ENCODE measurements at regions of chr19 and their contacts with region 1.

Region 1: DNA sequence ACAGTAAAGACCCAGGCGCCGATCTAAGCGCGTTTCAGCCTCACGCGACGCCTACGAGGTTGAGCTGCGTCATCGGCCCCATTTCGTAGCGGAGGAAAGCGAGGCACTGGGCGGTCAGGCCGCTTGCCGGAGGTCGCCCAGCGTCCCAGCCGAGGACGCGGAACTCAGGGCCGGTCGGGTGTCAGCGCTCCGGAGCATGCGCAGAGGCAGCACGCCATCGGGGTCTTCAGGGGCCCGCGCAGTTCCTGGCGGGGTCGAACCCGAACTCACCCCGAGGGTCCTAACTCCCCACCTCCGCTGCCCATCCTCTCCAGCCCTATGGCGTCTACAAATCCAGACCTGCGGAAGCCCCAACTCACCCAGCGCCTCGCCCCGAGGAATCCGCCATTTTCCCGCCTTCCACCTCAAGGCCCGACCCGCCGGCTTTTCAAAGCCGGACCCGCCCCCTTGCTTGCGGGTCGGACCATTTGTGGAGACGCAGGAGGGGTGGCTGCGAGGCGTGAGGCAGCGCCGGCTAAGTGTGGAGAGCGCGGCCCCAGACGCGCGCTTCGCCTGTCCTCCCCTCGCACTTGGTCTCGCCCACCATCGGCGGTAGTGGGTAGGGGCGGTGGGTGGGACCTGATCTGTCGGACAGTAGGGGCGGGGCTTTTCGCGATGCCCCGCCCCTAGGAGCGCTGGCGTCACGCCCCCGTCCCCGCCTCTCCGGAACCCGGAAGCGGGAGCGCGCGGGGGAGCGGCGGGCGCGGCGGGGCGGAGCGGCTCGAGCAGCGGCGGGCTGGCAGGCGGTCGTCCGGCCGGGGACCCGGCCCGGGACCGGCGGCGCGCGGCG is at the starts of genes HAUS8 and MYO9B:
- DNase-seq: peak; percentile 98 to 100 (median 99)
- ATAC-seq: peak; percentile 89 to 96
- H3K4me3 Mint-ChIP-seq: peak within 1 kb of the TSS; percentile 91 to 99 (median 98)
- H3K27ac Mint-ChIP-seq: peak within 1 kb of the TSS; percentile 92 to 99 (median 97)
- H3K4me1 Mint-ChIP-seq: peaks cover 29 to 74% (median 66%) of the 10 kb centered on the region in 4 donors
- H3K27me3 Mint-ChIP-seq: no peaks in the 10 kb centered on the region
- polyA plus RNA-seq, gene HAUS8: 5.3 to 11.9 (median 5.9) TPM
- polyA plus RNA-seq, gene MYO9B: 3.3 to 22.3 (median 8.0) TPM

Region 2: DNA sequence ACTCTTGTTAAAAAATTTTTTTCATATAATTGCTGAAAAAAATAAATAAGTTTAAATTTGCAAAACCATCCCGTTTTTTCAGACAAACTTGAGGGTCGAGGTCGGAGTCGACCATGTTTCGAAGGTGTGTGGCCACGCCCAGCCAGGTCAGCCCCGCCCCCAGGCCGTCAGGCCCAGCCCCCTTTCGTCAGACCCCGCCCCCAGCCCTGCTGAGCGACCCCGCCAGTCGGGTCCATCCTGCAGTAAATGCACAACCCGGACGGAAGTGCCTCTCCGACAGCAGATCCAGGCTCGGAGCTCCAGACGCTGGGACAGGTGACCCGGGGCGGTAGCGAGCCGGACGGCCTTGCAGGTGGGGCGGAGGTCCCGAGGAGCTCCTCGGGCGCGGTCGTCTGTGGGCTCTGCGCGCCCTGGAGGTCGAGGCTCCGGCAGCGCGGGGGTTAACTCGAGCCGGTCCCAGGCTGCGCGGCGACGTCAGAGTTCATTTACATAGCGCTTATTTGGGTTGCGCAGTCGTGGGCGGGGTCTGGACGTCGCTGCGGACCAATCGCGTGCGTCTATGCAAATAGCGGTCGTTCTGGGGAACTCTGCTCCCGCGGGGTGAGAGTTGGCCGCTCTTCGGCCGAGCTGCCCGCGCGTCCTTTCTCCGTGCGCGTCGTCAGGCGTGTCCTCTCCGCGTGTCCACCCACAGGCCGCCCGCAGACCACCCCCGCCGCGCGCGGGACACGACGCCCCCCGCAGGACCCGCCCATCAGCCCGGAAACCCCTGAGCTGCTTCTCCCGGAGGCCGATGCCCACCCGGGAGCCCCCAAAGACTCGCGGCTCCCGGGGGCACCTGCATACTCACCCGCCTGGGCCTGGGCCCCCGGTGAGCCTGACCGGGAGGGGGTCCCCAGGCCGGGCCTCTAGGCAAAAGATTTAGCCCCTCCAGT is 151.0 kb after region 1 on chr19 and contains the start of gene OCEL1:
- POLR2A ChIA-PET with region 1: interaction called, 23 read pairs
- DNase-seq: peak; percentile 92 to 99 (median 94)
- ATAC-seq: peak; percentile 90 to 92
- H3K4me3 Mint-ChIP-seq: peak within 1 kb of the TSS; percentile 88 to 99 (median 94)
- H3K27ac Mint-ChIP-seq: peak within 1 kb of the TSS; percentile 66 to 99 (median 96)
- H3K4me1 Mint-ChIP-seq: peaks cover 7 to 17% (median 11%) of the 10 kb centered on the region in 4 donors
- H3K27me3 Mint-ChIP-seq: no peaks in the 10 kb centered on the region
- polyA plus RNA-seq, gene OCEL1: 21.9 to 52.4 (median 40.1) TPM

Measured in naive thymus-derived CD8-positive, alpha-beta T cell (primary cell).